ENCODE measurements at regions of chr12 and their contacts with region 1.

Region 1: DNA sequence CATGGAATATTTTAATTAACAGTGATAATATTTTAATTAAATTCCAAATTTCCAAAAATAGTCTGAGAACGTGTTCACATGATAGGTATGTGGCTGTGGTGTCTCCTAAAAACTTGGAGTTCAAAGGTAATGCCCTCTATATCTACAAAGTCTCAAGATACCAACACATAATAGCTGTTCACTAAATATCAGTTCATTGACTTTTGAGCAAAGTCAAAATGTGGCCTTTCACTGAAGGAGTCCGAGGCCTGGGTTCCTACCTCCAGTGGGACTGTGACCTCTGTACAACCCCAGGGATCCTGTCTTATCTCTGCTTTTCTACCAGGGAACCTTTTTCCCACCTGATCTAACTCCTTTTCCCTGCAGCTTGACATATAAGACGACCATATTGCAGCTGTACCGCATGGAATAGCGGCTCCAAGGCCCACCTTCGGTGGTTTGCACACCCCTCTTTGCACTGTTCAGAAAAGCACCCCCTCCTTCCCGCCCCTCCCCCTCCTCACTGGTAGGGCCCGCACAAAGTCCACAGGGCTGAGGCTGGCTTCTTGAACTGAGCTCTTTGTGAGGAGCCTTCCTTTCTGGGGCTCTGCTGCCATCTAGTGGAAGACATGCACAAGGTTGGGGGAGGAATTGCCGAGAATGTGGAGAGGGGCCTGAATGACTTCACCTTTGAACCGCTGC is 3.1 kb downstream of the CCND2 start:
- DNase-seq: peak; percentile 67 to 94 (median 88)
- ATAC-seq: peak; percentile 30
- H3K4me3 ChIP-seq: no peak overlapping the region
- H3K4me3 Mint-ChIP-seq: peak overlapping the region; percentile 97
- H3K27ac ChIP-seq: peak overlapping the region in 1 of 2 experiments; percentile 94
- H3K27ac Mint-ChIP-seq: peak overlapping the region; percentile 98
- H3K4me1 ChIP-seq: peaks cover 67% of the 10 kb centered on the region
- H3K4me1 Mint-ChIP-seq: peaks cover 65% of the 10 kb centered on the region
- H3K27me3 ChIP-seq: no peaks in the 10 kb centered on the region
- H3K27me3 Mint-ChIP-seq: no peaks in the 10 kb centered on the region
- CTCF ChIP-seq: peak; percentile 83

Region 2: DNA sequence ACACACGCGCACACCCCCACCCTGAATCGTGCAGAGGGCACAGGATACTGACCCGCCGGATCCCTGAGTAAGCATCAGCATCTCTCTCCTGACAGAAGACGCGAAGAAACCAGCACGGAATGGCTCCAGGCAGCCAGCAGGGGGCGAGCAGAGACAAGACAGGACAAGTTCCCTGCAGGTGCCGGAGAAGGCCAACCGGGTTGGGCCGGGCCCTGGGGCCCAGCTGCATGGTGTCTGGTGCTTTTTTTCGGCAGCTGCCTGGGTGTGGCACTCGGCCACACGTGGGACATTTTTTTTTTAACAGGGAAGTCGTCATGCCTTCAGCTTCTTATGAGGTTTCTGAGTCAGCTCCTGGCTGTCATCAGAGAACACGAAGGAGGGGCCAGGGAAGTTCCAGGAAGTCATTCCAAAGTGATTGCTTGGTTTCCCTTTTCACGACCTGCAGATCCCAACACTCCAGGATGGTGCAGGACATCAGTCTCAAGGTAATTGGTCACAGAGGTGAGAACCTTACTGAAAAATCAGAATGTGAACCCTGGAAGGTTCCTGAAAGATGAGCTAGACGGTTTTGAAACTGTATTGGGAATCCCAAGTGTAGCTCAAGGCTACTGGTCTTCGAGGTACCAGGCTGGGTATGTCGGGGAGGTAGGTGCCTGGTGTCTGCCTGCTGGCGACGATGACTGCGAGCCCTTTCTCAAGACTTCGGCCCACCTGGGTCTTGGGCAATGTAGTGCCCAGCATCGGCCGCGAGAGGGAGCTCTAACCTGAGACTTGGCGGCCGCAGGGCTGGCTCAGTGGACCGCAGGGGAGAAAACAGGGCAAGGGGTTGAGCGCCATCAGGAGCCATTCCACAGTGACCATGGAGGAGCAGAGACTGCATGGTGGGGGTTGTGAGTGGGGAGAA is 976.5 kb before region 1 on chr12:
- CTCF ChIA-PET with region 1: interaction called, 3 read pairs
- POLR2A ChIA-PET with region 1: no interaction called
- intact Hi-C with region 1: loop called (anchors 2 to 5 kb)
- DNase-seq: peak; percentile 58 to 83 (median 77)
- ATAC-seq: peak; percentile 84
- H3K4me3 ChIP-seq: peak overlapping the region; percentile 4
- H3K4me3 Mint-ChIP-seq: peak overlapping the region; percentile 57
- H3K27ac ChIP-seq: no peak overlapping the region
- H3K27ac Mint-ChIP-seq: peak overlapping the region; percentile 70
- H3K4me1 ChIP-seq: peaks cover 9% of the 10 kb centered on the region
- H3K4me1 Mint-ChIP-seq: peaks cover 10% of the 10 kb centered on the region
- H3K27me3 ChIP-seq: no peaks in the 10 kb centered on the region
- H3K27me3 Mint-ChIP-seq: peaks cover 11% of the 10 kb centered on the region
- CTCF ChIP-seq: peak; percentile 78

Region 3: GRCh38 chr12:3964439-3964838 is 312.2 kb before region 1 on chr12:
- CTCF ChIA-PET with region 1: interaction called, 56 read pairs
- POLR2A ChIA-PET with region 1: interaction called, 9 read pairs
- intact Hi-C with region 1: loop called (anchors 2 kb)
- DNase-seq: no peak
- ATAC-seq: no peak
- H3K4me3 ChIP-seq: no peak overlapping the region
- H3K4me3 Mint-ChIP-seq: no peak overlapping the region
- H3K27ac ChIP-seq: no peak overlapping the region
- H3K27ac Mint-ChIP-seq: no peak overlapping the region
- H3K4me1 ChIP-seq: peaks cover 20% of the 10 kb centered on the region
- H3K4me1 Mint-ChIP-seq: peaks cover 29% of the 10 kb centered on the region
- H3K27me3 ChIP-seq: no peaks in the 10 kb centered on the region
- H3K27me3 Mint-ChIP-seq: no peaks in the 10 kb centered on the region
- CTCF ChIP-seq: no peak

Region 4: GRCh38 chr12:4006743-4007142 is 269.9 kb before region 1 on chr12:
- CTCF ChIA-PET with region 1: interaction called, 168 read pairs
- POLR2A ChIA-PET with region 1: no interaction called
- intact Hi-C with region 1: no loop called
- DNase-seq: no peak
- ATAC-seq: no peak
- H3K4me3 ChIP-seq: no peak overlapping the region
- H3K4me3 Mint-ChIP-seq: no peak overlapping the region
- H3K27ac ChIP-seq: no peak overlapping the region
- H3K27ac Mint-ChIP-seq: no peak overlapping the region
- H3K4me1 ChIP-seq: no peaks in the 10 kb centered on the region
- H3K4me1 Mint-ChIP-seq: no peaks in the 10 kb centered on the region
- H3K27me3 ChIP-seq: no peaks in the 10 kb centered on the region
- H3K27me3 Mint-ChIP-seq: no peaks in the 10 kb centered on the region
- CTCF ChIP-seq: no peak

Region 5: DNA sequence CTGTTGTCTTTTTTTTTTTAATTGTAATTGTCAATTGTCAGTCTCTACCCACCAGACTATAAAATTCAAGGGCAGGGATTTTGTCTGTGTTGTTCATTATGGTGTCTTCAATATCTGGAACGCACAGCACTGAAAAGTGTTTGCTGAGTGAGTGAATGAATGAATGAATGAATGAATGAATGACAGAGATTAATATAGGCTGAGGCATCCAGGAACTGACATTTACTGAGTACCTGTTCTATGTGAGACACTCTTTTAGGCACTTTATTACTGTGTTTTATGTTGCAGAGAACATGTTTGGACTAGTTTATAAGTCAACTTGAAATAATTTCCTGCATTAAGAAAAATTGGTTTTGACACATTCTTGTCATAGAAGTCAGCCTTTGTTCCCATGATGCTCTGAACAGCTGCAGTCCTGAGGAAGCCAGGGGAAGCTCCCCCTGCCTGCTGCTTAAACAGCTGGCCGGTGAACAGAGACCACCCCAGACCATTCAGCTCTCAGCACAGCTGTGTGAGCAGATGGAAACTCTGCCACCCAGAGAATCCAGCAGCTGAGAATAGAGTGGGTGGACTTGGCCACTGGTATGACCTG is 163.8 kb before region 1 on chr12:
- CTCF ChIA-PET with region 1: interaction called, 90 read pairs
- POLR2A ChIA-PET with region 1: interaction called, 8 read pairs
- intact Hi-C with region 1: no loop called
- DNase-seq: no peak
- ATAC-seq: no peak
- H3K4me3 ChIP-seq: no peak overlapping the region
- H3K4me3 Mint-ChIP-seq: no peak overlapping the region
- H3K27ac ChIP-seq: no peak overlapping the region
- H3K27ac Mint-ChIP-seq: no peak overlapping the region
- H3K4me1 ChIP-seq: peaks cover 11% of the 10 kb centered on the region
- H3K4me1 Mint-ChIP-seq: peaks cover 18% of the 10 kb centered on the region
- H3K27me3 ChIP-seq: no peaks in the 10 kb centered on the region
- H3K27me3 Mint-ChIP-seq: peaks cover 4% of the 10 kb centered on the region
- CTCF ChIP-seq: no peak

Region 6: DNA sequence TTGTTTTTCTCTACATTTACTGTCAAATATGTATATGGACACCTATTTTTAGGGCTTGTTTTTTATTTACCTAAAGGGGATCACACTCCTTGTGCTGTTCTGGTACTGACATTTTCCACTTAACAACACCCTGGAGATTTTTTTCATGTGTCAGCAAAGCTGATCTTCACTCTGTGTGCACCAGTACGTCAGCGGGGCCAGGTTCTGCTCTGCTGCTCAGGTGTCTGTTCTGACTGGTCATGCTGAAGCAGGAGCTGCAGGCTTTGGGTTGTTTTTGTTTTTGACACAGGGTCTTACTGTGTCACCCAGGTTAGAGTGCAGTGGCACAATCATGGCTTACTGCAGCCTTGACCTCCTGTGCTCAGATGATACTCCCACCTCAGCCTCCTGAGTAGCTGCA is 85.0 kb before region 1 on chr12:
- CTCF ChIA-PET with region 1: no interaction called
- POLR2A ChIA-PET with region 1: no interaction called
- intact Hi-C with region 1: no loop called
- DNase-seq: no peak
- ATAC-seq: no peak
- H3K4me3 ChIP-seq: no peak overlapping the region
- H3K4me3 Mint-ChIP-seq: no peak overlapping the region
- H3K27ac ChIP-seq: no peak overlapping the region
- H3K27ac Mint-ChIP-seq: no peak overlapping the region
- H3K4me1 ChIP-seq: no peaks in the 10 kb centered on the region
- H3K4me1 Mint-ChIP-seq: no peaks in the 10 kb centered on the region
- H3K27me3 ChIP-seq: no peaks in the 10 kb centered on the region
- H3K27me3 Mint-ChIP-seq: no peaks in the 10 kb centered on the region
- CTCF ChIP-seq: no peak

Region 7: DNA sequence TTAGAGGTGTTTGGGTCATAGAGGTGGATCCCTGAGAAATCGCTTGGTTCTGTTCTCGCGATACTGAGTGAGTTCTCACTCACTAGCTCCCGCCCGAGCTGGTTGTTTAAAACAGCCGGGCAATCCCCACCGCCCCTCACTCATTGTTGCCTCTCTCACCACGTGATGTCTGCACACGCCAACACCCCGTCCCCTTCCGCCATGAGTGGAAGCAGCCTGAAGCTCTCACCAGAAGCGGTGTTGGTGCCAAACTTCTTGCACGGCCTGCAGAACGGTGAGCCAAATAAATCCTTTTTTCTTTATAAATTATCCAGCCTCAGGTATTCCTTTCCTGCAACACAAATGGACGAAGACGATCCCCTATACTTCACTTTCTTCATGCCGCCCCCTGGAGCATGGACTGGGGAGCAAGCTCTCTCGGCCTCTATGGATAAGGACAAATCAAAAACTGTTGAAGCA is 48.5 kb before region 1 on chr12:
- CTCF ChIA-PET with region 1: no interaction called
- POLR2A ChIA-PET with region 1: no interaction called
- intact Hi-C with region 1: loop called in 1 of 2 experiments (anchors 1 kb)
- DNase-seq: peak in 1 of 9 experiments; percentile 5
- ATAC-seq: no peak
- H3K4me3 ChIP-seq: no peak overlapping the region
- H3K4me3 Mint-ChIP-seq: no peak overlapping the region
- H3K27ac ChIP-seq: no peak overlapping the region
- H3K27ac Mint-ChIP-seq: no peak overlapping the region
- H3K4me1 ChIP-seq: no peaks in the 10 kb centered on the region
- H3K4me1 Mint-ChIP-seq: no peaks in the 10 kb centered on the region
- H3K27me3 ChIP-seq: no peaks in the 10 kb centered on the region
- H3K27me3 Mint-ChIP-seq: no peaks in the 10 kb centered on the region
- CTCF ChIP-seq: no peak

Region 8: GRCh38 chr12:4293299-4293965 is 16.8 kb after region 1 on chr12:
- CTCF ChIA-PET with region 1: interaction called, 18 read pairs
- POLR2A ChIA-PET with region 1: interaction called, 6 read pairs
- intact Hi-C with region 1: no loop called
- DNase-seq: peak in 4 of 9 experiments; percentile 33 to 42 (median 37)
- ATAC-seq: peak; percentile 63
- H3K4me3 ChIP-seq: peak overlapping the region in 1 of 2 experiments; percentile 17
- H3K4me3 Mint-ChIP-seq: peak overlapping the region; percentile 74
- H3K27ac ChIP-seq: peak overlapping the region; percentile 37 to 66
- H3K27ac Mint-ChIP-seq: peak overlapping the region; percentile 96
- H3K4me1 ChIP-seq: peaks cover 47% of the 10 kb centered on the region
- H3K4me1 Mint-ChIP-seq: peaks cover 74% of the 10 kb centered on the region
- H3K27me3 ChIP-seq: no peaks in the 10 kb centered on the region
- H3K27me3 Mint-ChIP-seq: no peaks in the 10 kb centered on the region
- CTCF ChIP-seq: no peak

Region 9: GRCh38 chr12:4736061-4736460 is 459.4 kb after region 1 on chr12:
- CTCF ChIA-PET with region 1: no interaction called
- POLR2A ChIA-PET with region 1: no interaction called
- intact Hi-C with region 1: no loop called
- DNase-seq: no peak
- ATAC-seq: no peak
- H3K4me3 ChIP-seq: no peak overlapping the region
- H3K4me3 Mint-ChIP-seq: no peak overlapping the region
- H3K27ac ChIP-seq: no peak overlapping the region
- H3K27ac Mint-ChIP-seq: no peak overlapping the region
- H3K4me1 ChIP-seq: no peaks in the 10 kb centered on the region
- H3K4me1 Mint-ChIP-seq: no peaks in the 10 kb centered on the region
- H3K27me3 ChIP-seq: no peaks in the 10 kb centered on the region
- H3K27me3 Mint-ChIP-seq: peaks cover 22% of the 10 kb centered on the region
- CTCF ChIP-seq: no peak

Measured in CD8-positive, alpha-beta T cell (primary cell).